ENCODE measurements at regions of chr3 and their contacts with region 1.

Region 1: GRCh38 chr3:49007068-49007770 is at the start of gene WDR6:
- DNase-seq: peak; percentile 99
- ATAC-seq: peak; percentile 90
- H3K4me3 Mint-ChIP-seq: peak within 1 kb of the TSS; percentile 100
- H3K27ac Mint-ChIP-seq: peak within 1 kb of the TSS; percentile 100
- H3K4me1 Mint-ChIP-seq: peaks cover 16% of the 10 kb centered on the region
- H3K27me3 Mint-ChIP-seq: no peaks in the 10 kb centered on the region
- total RNA-seq, gene WDR6: 109 to 127 TPM

Region 2: DNA sequence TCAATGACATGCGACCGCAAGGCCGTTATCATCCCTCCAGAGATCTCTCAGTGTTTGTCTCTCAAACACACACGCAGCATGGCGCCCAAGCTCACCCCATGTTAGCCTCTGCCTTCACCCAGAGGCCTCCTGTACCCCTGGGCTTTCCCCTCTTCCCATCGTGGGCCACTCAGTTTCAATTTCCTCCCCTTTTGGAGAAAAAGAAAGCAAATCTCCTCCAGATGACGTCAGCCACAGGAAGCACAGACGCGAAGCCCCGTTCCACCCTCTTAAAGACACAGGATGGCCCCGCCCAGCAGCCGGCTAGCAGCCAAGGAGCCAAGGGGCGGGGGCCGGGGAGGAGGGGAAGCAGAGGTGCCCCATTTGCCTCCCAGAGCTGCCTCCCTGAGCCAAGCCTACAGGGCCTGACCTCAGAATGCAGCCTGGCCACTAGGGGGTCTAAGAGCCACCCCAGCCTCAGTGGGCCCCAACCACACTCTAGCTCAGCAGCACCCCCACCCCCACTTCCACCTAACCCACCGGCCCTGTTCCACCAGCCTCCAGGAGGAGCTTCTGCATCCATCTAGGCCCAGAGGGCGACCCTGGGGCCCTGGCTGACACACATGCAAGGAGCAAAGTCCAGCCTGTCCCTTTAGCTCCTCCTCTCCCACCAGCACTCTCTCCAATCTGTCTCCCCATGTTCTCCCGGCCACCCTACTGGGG is 534.2 kb before region 1 on chr3:
- CTCF ChIA-PET with region 1: no interaction called
- POLR2A ChIA-PET with region 1: interaction called, 3 read pairs
- intact Hi-C with region 1: loop called in 1 of 2 experiments (anchors 5 kb)
- DNase-seq: peak; percentile 99
- ATAC-seq: peak; percentile 90
- H3K4me3 Mint-ChIP-seq: peak overlapping the region; percentile 74
- H3K27ac Mint-ChIP-seq: peak overlapping the region; percentile 93
- H3K4me1 Mint-ChIP-seq: peaks cover 49% of the 10 kb centered on the region
- H3K27me3 Mint-ChIP-seq: no peaks in the 10 kb centered on the region

Region 3: DNA sequence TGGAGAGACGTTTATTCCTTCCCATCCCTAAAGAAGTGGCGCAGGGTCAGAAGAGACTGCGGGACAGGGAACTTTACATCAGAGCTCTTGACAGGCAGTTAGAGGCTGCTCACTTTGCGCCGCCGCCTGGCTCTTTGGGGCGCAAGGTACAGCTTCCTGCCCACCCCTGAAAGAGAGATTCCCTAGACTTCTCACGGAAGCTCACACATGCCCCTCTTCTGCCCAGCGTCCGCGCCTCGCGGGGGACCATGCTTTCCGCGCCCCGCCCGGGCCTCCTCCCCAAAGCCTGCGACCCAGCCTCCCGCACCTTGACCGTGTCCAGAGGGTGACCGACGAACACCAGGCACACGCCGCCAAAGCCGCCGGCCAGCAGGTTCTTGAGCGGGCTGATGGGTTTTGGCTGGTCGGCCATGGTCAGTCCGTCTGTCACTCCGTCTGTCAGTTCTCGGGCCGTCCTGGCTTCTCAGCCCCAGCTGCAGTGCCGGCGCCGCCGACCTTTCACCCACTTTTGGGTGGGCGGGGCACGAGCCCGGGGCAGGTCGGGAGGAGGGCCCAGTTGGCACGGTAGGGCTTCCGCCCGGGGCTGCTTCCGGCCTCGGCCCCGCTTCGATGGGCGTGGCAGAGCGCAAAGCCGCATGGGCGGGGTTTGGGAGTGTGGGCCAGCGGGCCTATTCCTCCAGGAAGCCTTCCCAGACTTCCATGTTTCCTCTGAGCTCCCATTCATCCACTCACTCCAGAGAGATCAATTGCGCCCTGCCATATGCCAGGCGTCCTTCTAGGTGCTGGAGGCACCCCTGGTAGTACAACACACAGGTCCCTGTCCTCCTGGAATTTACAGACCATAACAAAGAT is 108.6 kb before region 1 on chr3 and contains the start of gene SLC25A20:
- CTCF ChIA-PET with region 1: no interaction called
- POLR2A ChIA-PET with region 1: no interaction called
- intact Hi-C with region 1: loop called in 1 of 2 experiments (anchors 1 kb)
- DNase-seq: peak; percentile 96
- ATAC-seq: peak; percentile 96
- H3K4me3 Mint-ChIP-seq: peak within 1 kb of the TSS; percentile 90
- H3K27ac Mint-ChIP-seq: peak within 1 kb of the TSS; percentile 92
- H3K4me1 Mint-ChIP-seq: peaks cover 30% of the 10 kb centered on the region
- H3K27me3 Mint-ChIP-seq: no peaks in the 10 kb centered on the region
- total RNA-seq, gene SLC25A20: 15.8 to 18.5 TPM

Region 4: DNA sequence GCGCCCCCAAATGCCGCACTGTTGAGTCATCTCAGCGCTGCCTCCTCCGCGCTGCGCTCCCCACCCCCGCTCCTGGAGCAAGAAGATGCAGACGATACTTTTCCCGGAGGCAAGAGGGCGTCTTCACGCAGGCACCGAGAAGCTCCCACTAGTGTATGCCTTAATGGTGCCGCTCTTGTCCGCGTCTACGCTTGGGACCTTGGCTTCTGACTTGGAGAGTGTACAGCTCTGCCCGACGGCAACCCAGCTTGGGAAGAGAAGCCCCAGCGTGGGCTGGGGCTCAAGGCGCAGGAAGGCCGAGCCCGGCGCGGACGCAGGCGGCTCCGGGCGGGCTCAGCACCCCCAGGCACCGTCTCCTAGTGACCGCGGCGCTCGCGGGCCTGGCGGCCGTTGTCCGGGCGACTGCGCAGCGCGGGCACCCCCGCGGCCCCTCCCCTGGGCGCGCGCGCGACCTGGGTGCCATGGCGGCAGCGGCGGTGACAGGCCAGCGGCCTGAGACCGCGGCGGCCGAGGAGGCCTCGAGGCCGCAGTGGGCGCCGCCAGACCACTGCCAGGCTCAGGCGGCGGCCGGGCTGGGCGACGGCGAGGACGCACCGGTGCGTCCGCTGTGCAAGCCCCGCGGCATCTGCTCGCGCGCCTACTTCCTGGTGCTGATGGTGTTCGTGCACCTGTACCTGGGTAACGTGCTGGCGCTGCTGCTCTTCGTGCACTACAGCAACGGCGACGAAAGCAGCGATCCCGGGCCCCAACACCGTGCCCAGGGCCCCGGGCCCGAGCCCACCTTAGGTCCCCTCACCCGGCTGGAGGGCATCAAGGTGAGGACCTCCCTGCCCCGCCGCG is 17.2 kb before region 1 on chr3 and contains the start of gene P4HTM:
- CTCF ChIA-PET with region 1: interaction called, 61 read pairs
- POLR2A ChIA-PET with region 1: interaction called, 14 read pairs
- intact Hi-C with region 1: loop called (anchors 1 kb)
- DNase-seq: peak; percentile 90
- ATAC-seq: peak; percentile 76
- H3K4me3 Mint-ChIP-seq: peak within 1 kb of the TSS; percentile 95
- H3K27ac Mint-ChIP-seq: peak within 1 kb of the TSS; percentile 93
- H3K4me1 Mint-ChIP-seq: peaks cover 35% of the 10 kb centered on the region
- H3K27me3 Mint-ChIP-seq: no peaks in the 10 kb centered on the region
- total RNA-seq, gene P4HTM: 25.7 to 30.4 TPM

Region 5: GRCh38 chr3:49028673-49029562 is 21.7 kb after region 1 on chr3 and contains the start of gene IMPDH2:
- CTCF ChIA-PET with region 1: interaction called, 31 read pairs
- POLR2A ChIA-PET with region 1: interaction called, 102 read pairs
- intact Hi-C with region 1: loop called in 1 of 2 experiments (anchors 1 kb)
- DNase-seq: peak; percentile 96
- ATAC-seq: peak; percentile 93
- H3K4me3 Mint-ChIP-seq: peak within 1 kb of the TSS; percentile 89
- H3K27ac Mint-ChIP-seq: peak within 1 kb of the TSS; percentile 97
- H3K4me1 Mint-ChIP-seq: peaks cover 53% of the 10 kb centered on the region
- H3K27me3 Mint-ChIP-seq: no peaks in the 10 kb centered on the region
- total RNA-seq, gene IMPDH2: 504 to 515 TPM

Region 6: GRCh38 chr3:49104483-49105291 is 97.5 kb after region 1 on chr3 and contains the start of gene QARS1:
- CTCF ChIA-PET with region 1: no interaction called
- POLR2A ChIA-PET with region 1: no interaction called
- intact Hi-C with region 1: loop called in 1 of 2 experiments (anchors 1 kb)
- DNase-seq: peak; percentile 94
- ATAC-seq: peak; percentile 100
- H3K4me3 Mint-ChIP-seq: peak within 1 kb of the TSS; percentile 96
- H3K27ac Mint-ChIP-seq: peak within 1 kb of the TSS; percentile 96
- H3K4me1 Mint-ChIP-seq: peaks cover 21% of the 10 kb centered on the region
- H3K27me3 Mint-ChIP-seq: no peaks in the 10 kb centered on the region
- total RNA-seq, gene QARS1: 240 to 342 TPM

Region 7: DNA sequence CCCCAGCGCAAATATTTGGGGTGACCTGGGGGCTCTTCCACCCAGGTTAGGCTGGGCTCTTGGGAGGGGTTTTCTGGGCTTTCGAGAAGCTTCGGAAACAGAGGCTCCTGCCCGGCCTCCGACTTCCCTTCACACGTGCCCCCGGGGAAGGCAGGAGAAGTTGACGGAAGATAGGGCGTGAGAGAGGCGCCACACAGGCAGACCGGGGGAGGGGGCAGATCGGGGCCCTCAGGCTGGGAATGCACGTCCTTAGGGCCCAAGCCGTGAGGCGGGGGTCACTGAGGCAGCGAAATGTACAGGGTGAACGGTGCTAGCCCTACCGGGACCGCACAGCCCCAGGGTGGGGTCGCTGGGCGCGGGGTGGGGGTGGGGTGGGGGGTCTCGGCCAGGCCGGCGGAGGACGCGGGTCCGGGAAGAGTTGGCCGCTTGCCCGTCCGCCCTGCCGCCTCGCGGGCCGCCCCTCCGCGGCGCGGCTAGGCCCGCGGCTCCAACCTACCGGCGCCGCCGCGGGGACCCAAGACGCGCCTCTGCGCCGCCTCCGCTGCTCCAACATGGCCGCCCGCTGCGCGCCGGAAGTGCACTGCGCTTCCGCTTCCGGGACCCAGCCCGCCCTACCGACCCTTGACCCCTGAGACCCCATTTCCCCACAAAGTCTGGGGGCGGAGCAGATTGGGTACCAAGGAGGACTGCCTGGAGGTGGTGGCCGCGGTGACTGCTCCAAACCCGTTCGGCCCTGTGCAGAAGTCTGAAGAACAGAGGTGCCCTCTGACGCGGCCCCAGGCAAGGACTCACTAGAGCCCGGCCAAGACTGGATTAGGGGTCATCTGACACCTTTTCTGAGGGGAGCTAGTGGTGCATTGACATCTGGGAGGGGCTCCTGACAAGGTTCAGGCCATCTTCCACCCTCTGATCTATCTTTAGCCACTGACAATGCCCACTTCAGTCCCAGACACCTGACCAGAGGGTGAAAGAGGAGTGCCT is 158.8 kb after region 1 on chr3 and contains the start of gene CCDC71:
- CTCF ChIA-PET with region 1: interaction called, 5 read pairs
- POLR2A ChIA-PET with region 1: no interaction called
- intact Hi-C with region 1: loop called in 1 of 2 experiments (anchors 1 kb)
- DNase-seq: peak; percentile 88
- ATAC-seq: peak; percentile 81
- H3K4me3 Mint-ChIP-seq: peak within 1 kb of the TSS; percentile 90
- H3K27ac Mint-ChIP-seq: peak within 1 kb of the TSS; percentile 89
- H3K4me1 Mint-ChIP-seq: peaks cover 39% of the 10 kb centered on the region
- H3K27me3 Mint-ChIP-seq: no peaks in the 10 kb centered on the region
- total RNA-seq, gene CCDC71: 19.5 to 22.2 TPM

Measured in activated CD4-positive, alpha-beta T cell treated with anti-CD3 and anti-CD28 coated beads for 36 hours (primary cell).